SK-N-SH (cell line): ENCODE measurements at regions of chr11 and their contacts with region 1.

Region 1: GRCh38 chr11:72244361-72245262 is 636 bp upstream of the PHOX2A start:
- DNase-seq: peak; percentile 92
- H3K4me3 ChIP-seq: peak overlapping the region; percentile 14 to 83; a peak in 2 of 4 replicates
- H3K27ac ChIP-seq: peak overlapping the region in 1 of 2 experiments; percentile 79; a peak in 2 of 4 replicates
- H3K4me1 ChIP-seq: peaks cover 4 to 10% of the 10 kb centered on the region in 2 experiments; a peak in 1 of 4 replicates
- H3K27me3 ChIP-seq: no peaks in the 10 kb centered on the region; the same call in 1 of the 2 replicates
- CTCF ChIP-seq: no peak
- EP300 ChIP-seq: peak in 1 of 2 experiments; percentile 59; a peak in 2 of 4 replicates
- RAD21 ChIP-seq: peak; percentile 41

Region 2: GRCh38 chr11:72191961-72192381 is 52.6 kb before region 1 on chr11 and contains the start of gene FOLR1:
- CTCF ChIA-PET with region 1: no interaction called
- POLR2A ChIA-PET with region 1: no interaction called
- DNase-seq: no peak
- H3K4me3 ChIP-seq: no peak within 1 kb of the TSS
- H3K27ac ChIP-seq: no peak within 1 kb of the TSS
- H3K4me1 ChIP-seq: peaks cover 0 to 12% of the 10 kb centered on the region in 2 experiments; a peak in 1 of 4 replicates
- H3K27me3 ChIP-seq: no peaks in the 10 kb centered on the region
- CTCF ChIP-seq: no peak
- EP300 ChIP-seq: no peak
- RAD21 ChIP-seq: no peak
- polyA plus RNA-seq, gene FOLR1: 0.26 TPM in 1 of 2 replicates, not detected in the other

Region 3: GRCh38 chr11:72222907-72223614 is 21.6 kb before region 1 on chr11:
- CTCF ChIA-PET with region 1: interaction called, 4 read pairs
- POLR2A ChIA-PET with region 1: interaction called, 14 read pairs
- DNase-seq: peak; percentile 92
- H3K4me3 ChIP-seq: peak overlapping the region; percentile 96 to 100
- H3K27ac ChIP-seq: peak overlapping the region; percentile 90 to 91
- H3K4me1 ChIP-seq: peaks cover 5 to 31% of the 10 kb centered on the region in 2 experiments; a peak in 3 of 4 replicates
- H3K27me3 ChIP-seq: no peaks in the 10 kb centered on the region
- CTCF ChIP-seq: no peak
- EP300 ChIP-seq: peak in 1 of 2 experiments; percentile 41; a peak in 1 of 4 replicates
- RAD21 ChIP-seq: no peak

Region 4: GRCh38 chr11:72293910-72294615 is 49.5 kb after region 1 on chr11:
- CTCF ChIA-PET with region 1: interaction called, 3 read pairs
- POLR2A ChIA-PET with region 1: interaction called, 15 read pairs
- DNase-seq: no peak
- H3K4me3 ChIP-seq: no peak overlapping the region
- H3K27ac ChIP-seq: no peak overlapping the region; a peak in 1 of 4 replicates
- H3K4me1 ChIP-seq: peaks cover 0 to 13% of the 10 kb centered on the region in 2 experiments; a peak in 1 of 4 replicates
- H3K27me3 ChIP-seq: no peaks in the 10 kb centered on the region
- CTCF ChIP-seq: no peak
- EP300 ChIP-seq: no peak
- RAD21 ChIP-seq: no peak

Region 5: DNA sequence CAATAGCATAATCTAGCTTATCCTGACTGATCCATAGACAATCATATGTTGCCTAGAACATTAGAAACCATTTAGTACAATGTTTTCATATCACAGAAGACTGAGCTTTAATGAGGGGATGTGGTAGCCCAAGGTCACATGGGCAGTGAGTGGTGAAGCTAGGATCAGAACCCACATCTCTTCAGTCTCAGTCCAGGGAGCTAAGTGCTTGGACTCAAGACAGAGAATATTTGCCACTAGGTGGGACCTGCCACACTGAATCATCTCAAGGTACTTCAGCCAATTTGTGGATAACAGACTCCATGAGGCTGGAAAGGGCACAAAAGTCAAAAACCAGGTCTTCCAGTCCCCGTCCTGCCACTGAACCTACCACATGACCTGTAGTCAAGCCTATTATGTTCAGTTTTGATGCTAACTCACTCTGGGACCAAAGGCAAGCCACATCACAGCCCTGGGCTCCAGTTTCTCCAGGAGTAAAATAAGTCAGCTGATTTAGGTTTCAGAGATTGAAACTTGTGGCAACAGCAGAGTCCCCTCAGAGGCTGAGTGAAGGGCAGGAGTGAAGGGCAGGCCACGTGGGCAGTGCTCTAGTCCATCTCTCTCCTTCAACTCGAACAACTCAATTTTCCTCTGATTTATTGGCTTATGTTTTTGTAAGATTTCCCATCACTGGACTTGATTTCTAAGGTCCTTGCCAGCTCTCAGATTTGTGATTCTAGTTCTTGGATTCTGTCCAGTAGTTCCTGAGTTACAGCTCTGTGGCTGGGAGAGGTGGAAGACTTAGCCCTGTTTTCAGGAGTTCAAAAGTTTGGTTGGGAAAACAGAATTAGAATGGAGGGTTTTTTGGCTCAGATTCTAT is 84.0 kb after region 1 on chr11:
- CTCF ChIA-PET with region 1: interaction called, 23 read pairs
- POLR2A ChIA-PET with region 1: interaction called, 81 read pairs
- DNase-seq: no peak
- H3K4me3 ChIP-seq: no peak overlapping the region
- H3K27ac ChIP-seq: peak overlapping the region; percentile 87 to 100
- H3K4me1 ChIP-seq: peaks cover 62 to 71% of the 10 kb centered on the region in 2 experiments
- H3K27me3 ChIP-seq: no peaks in the 10 kb centered on the region
- CTCF ChIP-seq: peak; percentile 51
- EP300 ChIP-seq: peak; percentile 42 to 61; a peak in 3 of 4 replicates
- RAD21 ChIP-seq: peak; percentile 24; the same call in 1 of the 2 replicates

Region 6: GRCh38 chr11:72333661-72334060 is 89.0 kb after region 1 on chr11:
- CTCF ChIA-PET with region 1: interaction called, 23 read pairs
- POLR2A ChIA-PET with region 1: interaction called, 81 read pairs
- DNase-seq: peak; percentile 61
- H3K4me3 ChIP-seq: no peak overlapping the region
- H3K27ac ChIP-seq: peak overlapping the region; percentile 35 to 99; a peak in 3 of 4 replicates
- H3K4me1 ChIP-seq: peaks cover 32 to 75% of the 10 kb centered on the region in 2 experiments
- H3K27me3 ChIP-seq: no peaks in the 10 kb centered on the region
- CTCF ChIP-seq: peak; percentile 52
- EP300 ChIP-seq: peak in 1 of 2 experiments; percentile 59; a peak in 1 of 4 replicates
- RAD21 ChIP-seq: peak; percentile 73

Region 7: GRCh38 chr11:72338741-72339140 is 94.1 kb after region 1 on chr11:
- CTCF ChIA-PET with region 1: interaction called, 23 read pairs
- POLR2A ChIA-PET with region 1: interaction called, 66 read pairs
- DNase-seq: no peak
- H3K4me3 ChIP-seq: no peak overlapping the region
- H3K27ac ChIP-seq: peak overlapping the region; percentile 15 to 99; a peak in 3 of 4 replicates
- H3K4me1 ChIP-seq: peaks cover 18 to 84% of the 10 kb centered on the region in 2 experiments; a peak in 3 of 4 replicates
- H3K27me3 ChIP-seq: no peaks in the 10 kb centered on the region
- CTCF ChIP-seq: no peak
- EP300 ChIP-seq: peak in 1 of 2 experiments; percentile 66; a peak in 1 of 4 replicates
- RAD21 ChIP-seq: no peak

Region 8: DNA sequence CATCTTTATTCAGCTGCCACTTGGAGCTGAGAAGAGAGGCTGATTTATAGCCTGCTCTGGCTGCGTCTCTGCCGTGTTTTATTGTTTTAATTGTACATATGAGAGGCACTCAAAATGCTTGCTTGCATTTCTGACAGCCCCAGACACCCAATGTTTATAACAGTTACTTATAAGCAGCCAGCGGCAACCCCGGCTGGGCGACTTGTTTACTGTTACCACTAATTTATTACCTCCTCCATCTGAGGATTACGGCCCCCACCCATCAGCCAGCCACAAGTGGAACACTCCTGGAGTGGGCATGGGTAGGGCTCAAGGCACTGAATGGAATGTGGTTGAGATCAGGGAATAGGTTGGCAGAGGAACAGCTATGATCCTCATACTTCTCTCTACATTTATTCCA is 128.6 kb after region 1 on chr11:
- CTCF ChIA-PET with region 1: no interaction called
- POLR2A ChIA-PET with region 1: interaction called, 16 read pairs
- DNase-seq: no peak
- H3K4me3 ChIP-seq: no peak overlapping the region
- H3K27ac ChIP-seq: peak overlapping the region in 1 of 2 experiments; percentile 99; a peak in 2 of 4 replicates
- H3K4me1 ChIP-seq: peaks cover 20 to 44% of the 10 kb centered on the region in 2 experiments
- H3K27me3 ChIP-seq: no peaks in the 10 kb centered on the region
- CTCF ChIP-seq: no peak
- EP300 ChIP-seq: 0 out of 4 replicates have a peak, but pooled peaks of 1 of the 2 experiments have one; percentile 13
- RAD21 ChIP-seq: no peak